ENCODE measurements at regions of chr15 and their contacts with region 1.

Region 1: DNA sequence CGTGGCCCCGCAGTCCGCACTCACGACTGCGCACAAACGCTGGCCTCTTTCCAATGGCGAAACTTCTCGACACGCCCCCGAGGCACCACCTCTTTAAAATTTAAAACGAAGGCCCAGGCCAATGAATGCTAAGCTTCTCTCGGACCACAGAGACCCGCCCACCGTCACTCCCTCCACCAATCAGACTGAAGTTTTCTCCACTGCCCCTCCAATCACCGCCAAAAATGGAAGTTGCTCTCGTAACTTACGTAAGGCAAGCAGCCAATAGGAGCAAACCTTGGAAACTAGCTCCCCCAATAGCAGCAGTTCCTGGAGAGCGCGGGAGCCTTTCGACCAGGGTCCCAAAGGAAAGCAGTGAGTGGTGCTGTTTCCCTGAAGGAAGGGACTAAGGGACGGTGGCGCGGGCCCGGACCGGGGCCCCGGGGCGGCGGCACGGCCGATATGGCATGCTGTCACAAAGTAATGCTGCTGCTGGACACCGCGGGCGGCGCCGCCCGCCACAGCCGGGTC is at the start of gene TICRR:
- DNase-seq: peak; percentile 95

Region 2: GRCh38 chr15:89502867-89503595 is 72.2 kb before region 1 on chr15:
- CTCF ChIA-PET with region 1: no interaction called
- POLR2A ChIA-PET with region 1: interaction called, 12 read pairs
- DNase-seq: no peak

Region 3: DNA sequence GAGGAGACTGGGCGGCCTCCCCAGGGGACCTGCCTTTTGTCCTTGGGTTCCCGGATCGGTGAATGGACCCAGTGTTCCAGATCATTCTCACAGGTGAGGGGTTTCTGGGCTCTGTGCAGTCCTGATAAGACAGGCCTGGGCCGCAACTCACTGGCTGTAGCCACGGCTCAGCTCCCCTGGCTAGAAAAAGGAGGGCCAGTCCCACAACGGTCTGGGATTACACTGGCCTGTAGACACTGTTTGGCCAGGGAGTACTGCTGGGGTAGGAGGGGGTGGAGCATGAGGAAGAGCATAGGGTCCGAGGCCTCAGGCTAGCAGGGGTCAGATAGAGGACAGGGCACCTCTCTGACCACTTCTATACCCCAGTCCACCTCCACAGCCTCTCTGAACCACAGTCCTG is 21.0 kb before region 1 on chr15:
- CTCF ChIA-PET with region 1: interaction called, 4 read pairs
- POLR2A ChIA-PET with region 1: interaction called, 13 read pairs
- DNase-seq: no peak

Region 4: GRCh38 chr15:89587952-89588351 is 12.8 kb after region 1 on chr15:
- CTCF ChIA-PET with region 1: interaction called, 3 read pairs
- POLR2A ChIA-PET with region 1: interaction called, 44 read pairs
- DNase-seq: no peak

Measured in HEK293T (cell line).